BJ (cell line): ENCODE measurements at regions of chr9 and their contacts with region 1.

Region 1: GRCh38 chr9:74952281-74953151 is at the start of gene C9orf40:
- DNase-seq: no peak
- H3K4me3 ChIP-seq: peak within 1 kb of the TSS; percentile 96
- H3K27me3 ChIP-seq: no peaks in the 10 kb centered on the region
- CTCF ChIP-seq: peak; percentile 78
- polyA plus RNA-seq, gene C9orf40: 1.0 and 2.2 TPM in 2 replicates

Region 2: DNA sequence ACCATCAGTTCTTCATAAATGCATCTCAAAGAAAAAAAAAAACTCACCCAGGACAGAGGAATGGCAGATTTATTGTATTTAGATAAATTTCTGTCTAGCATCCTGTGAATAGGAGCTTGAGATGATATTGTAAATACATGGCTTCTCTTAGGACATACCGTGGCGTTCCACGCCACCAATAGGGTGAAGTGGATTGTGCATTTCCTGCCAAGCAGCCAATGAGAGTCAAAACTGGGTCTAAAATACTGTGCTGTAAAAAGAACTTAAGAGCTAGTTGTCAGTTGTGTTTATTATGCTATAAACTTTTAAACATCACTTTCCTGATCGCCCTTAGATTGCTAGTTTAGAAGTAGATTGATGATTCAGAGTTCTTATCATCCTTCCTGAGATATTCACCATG is 43.9 kb before region 1 on chr9:
- CTCF ChIA-PET with region 1: no interaction called
- POLR2A ChIA-PET with region 1: no interaction called
- DNase-seq: no peak
- H3K4me3 ChIP-seq: no peak overlapping the region
- H3K27me3 ChIP-seq: no peaks in the 10 kb centered on the region
- CTCF ChIP-seq: no peak

Region 3: GRCh38 chr9:74940600-74940999 is 11.9 kb before region 1 on chr9:
- CTCF ChIA-PET with region 1: interaction called, 15 read pairs
- POLR2A ChIA-PET with region 1: no interaction called
- DNase-seq: no peak
- H3K4me3 ChIP-seq: no peak overlapping the region
- H3K27me3 ChIP-seq: no peaks in the 10 kb centered on the region
- CTCF ChIP-seq: no peak

Region 4: GRCh38 chr9:75013735-75014134 is 61.2 kb after region 1 on chr9:
- CTCF ChIA-PET with region 1: no interaction called
- POLR2A ChIA-PET with region 1: no interaction called
- DNase-seq: no peak
- H3K4me3 ChIP-seq: no peak overlapping the region
- H3K27me3 ChIP-seq: no peaks in the 10 kb centered on the region
- CTCF ChIP-seq: no peak

Region 5: DNA sequence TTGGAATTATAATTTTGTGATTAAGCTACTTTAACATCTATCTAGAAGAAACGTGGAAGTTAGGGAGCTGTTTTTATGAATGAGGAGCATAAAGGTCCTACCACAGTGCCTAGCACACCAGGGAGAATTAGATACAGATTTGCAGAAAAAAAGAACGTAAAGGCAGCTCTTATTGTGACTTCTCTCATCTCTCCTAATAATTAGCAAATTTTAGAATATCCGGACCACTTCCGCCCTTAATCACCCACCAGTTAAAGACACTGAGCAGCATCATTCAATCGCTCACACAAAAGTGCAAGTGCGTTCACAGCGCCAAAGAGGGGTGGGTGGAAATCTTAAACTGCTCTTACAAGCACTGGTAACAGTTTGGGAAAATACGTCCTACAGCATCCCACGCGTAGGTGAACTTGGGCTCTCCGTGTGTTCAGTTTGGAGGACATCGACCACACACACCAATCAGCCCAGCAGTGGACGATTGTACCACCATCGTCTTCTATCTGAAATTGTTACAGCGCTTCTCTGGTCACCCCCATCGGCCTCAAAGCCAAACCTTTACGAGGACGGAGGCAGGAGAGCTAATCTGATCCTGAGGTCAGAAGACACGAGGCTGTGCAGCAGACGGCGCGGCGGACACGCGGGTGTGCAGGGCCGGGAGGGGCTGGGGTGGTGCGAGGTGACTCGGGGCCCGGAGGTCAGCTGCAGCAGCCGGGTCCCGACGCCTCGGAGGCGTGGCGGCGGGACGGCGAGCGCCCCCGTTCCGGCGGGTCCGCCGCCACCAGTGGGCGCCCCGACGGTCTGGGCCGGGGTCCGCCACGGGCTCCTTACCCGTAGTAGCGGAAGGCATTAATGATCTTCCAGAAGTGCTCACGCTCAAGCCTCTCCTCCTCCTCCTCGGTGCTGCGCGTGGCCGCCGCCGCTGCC is 74.9 kb after region 1 on chr9:
- CTCF ChIA-PET with region 1: interaction called, 8 read pairs
- POLR2A ChIA-PET with region 1: interaction called, 24 read pairs
- DNase-seq: no peak
- H3K4me3 ChIP-seq: peak overlapping the region; percentile 64
- H3K27me3 ChIP-seq: no peaks in the 10 kb centered on the region
- CTCF ChIP-seq: no peak

Region 6: DNA sequence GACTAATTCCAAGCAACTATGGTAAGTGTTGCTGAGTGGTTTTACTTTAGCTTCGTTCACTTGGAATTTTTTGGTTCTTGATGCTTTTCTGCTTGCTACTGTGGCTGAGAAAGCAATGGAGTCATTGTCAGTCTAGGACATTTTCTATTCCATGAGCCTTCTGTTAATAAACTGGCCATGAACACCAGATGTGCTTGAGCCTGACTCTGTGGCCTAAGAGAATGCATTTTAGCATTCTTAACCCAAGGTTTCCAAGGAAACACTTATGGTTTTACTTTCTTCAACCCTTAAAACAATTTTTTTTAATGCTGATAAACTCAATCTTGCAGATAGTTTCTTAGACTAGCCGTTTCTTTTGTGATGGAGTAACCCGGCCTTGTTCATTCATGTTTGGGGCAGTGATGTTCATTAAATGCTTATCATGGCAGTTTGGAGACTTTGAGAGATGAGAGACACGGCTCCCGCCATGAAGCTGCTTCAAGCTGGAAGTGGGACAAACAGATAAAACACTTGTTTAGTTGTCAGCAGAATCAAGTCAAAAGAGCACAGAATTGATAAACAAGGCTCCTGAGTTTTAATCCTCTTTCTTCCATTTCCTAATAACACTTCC is 178.2 kb after region 1 on chr9:
- CTCF ChIA-PET with region 1: no interaction called
- POLR2A ChIA-PET with region 1: no interaction called
- DNase-seq: peak; percentile 74
- H3K4me3 ChIP-seq: no peak overlapping the region
- H3K27me3 ChIP-seq: no peaks in the 10 kb centered on the region
- CTCF ChIP-seq: no peak